ENCODE measurements at regions of chr14 and their contacts with region 1.

Region 1: DNA sequence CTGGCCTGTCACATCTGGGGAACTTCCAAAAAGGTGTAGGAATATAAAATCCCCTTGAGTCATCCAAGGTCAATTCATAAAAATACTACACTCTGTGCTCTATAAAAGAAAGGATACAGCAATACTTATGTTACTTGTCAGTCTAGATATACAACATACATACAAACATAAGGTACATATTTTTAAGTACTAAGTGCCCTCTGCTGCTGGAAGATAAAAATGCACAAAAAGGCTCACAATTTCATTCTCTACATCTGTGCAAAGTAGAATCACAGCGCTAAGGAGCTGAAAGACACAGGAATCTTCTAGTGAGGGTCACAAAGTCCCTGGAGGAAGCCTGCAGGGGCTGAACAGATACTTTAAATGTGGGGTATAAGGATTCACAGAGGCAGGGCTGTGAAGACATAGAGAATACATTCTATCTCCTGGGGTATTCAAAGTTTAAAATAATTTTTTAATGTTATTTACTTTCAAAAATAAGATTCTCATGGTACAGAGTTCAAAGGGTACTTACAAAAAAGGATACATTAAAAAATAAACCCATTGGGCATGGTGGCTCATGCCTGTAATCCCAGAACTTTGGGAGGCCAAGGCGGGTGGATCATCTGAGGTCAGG is 10.2 kb upstream of the GOLGA5 start:
- DNase-seq: peak; percentile 45
- H3K4me3 Mint-ChIP-seq: no peak overlapping the region
- H3K27ac Mint-ChIP-seq: no peak overlapping the region
- H3K4me1 Mint-ChIP-seq: peaks cover 21% of the 10 kb centered on the region
- H3K27me3 Mint-ChIP-seq: no peaks in the 10 kb centered on the region
- CTCF ChIP-seq: no peak

Region 2: GRCh38 chr14:92686900-92687444 is 97.0 kb before region 1 on chr14:
- CTCF ChIA-PET with region 1: interaction called, 10 read pairs
- intact Hi-C with region 1: loop called (anchors 10 kb)
- DNase-seq: peak; percentile 91
- H3K4me3 Mint-ChIP-seq: no peak overlapping the region
- H3K27ac Mint-ChIP-seq: no peak overlapping the region
- H3K4me1 Mint-ChIP-seq: no peaks in the 10 kb centered on the region
- H3K27me3 Mint-ChIP-seq: no peaks in the 10 kb centered on the region
- CTCF ChIP-seq: peak; percentile 97

Region 3: GRCh38 chr14:92698393-92698792 is 85.5 kb before region 1 on chr14:
- CTCF ChIA-PET with region 1: no interaction called
- intact Hi-C with region 1: no loop called
- DNase-seq: no peak
- H3K4me3 Mint-ChIP-seq: no peak overlapping the region
- H3K27ac Mint-ChIP-seq: no peak overlapping the region
- H3K4me1 Mint-ChIP-seq: no peaks in the 10 kb centered on the region
- H3K27me3 Mint-ChIP-seq: peaks cover 40% of the 10 kb centered on the region
- CTCF ChIP-seq: no peak

Region 4: GRCh38 chr14:92717571-92718042 is 66.3 kb before region 1 on chr14:
- CTCF ChIA-PET with region 1: interaction called, 5 read pairs
- intact Hi-C with region 1: loop called (anchors 1 kb)
- DNase-seq: no peak
- H3K4me3 Mint-ChIP-seq: no peak overlapping the region
- H3K27ac Mint-ChIP-seq: no peak overlapping the region
- H3K4me1 Mint-ChIP-seq: peaks cover 12% of the 10 kb centered on the region
- H3K27me3 Mint-ChIP-seq: no peaks in the 10 kb centered on the region
- CTCF ChIP-seq: no peak

Region 5: DNA sequence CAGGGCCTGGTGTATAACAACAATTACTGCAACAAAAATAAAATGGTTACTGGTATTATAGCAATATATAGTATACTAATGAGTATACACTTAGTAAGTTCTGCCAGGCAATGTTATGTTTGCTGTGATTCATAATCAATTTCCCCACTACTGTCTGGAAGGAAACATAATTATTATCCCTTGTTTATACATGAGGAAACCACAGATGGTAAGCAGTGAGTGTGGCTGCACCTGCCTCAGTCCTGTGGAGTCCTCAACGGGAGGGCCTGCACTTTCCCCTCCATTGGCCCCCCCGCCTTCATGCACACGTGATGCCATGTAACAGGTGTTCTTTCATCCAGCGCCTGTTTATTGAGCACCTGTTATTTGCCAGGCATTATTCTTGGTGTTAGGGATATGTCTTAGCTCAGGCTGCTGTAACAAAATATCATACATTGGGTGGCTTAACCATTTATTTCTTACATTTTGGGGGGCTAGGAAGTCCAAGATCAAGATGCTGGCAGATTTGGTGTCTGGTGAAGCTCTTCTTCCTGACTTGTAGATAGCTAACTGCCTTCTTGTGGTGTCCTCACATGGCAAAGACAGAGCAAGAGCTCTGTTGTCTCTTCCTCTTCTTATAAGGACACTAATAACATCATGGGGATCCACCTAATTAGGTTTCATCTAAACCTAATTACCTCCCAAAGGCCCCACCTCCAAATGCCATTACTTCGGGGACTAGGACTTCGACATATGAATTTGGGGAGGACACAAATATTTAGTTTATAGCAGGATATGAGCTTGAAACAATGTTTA is 79.6 kb after region 1 on chr14:
- CTCF ChIA-PET with region 1: no interaction called
- intact Hi-C with region 1: no loop called
- DNase-seq: no peak
- H3K4me3 Mint-ChIP-seq: no peak overlapping the region
- H3K27ac Mint-ChIP-seq: no peak overlapping the region
- H3K4me1 Mint-ChIP-seq: no peaks in the 10 kb centered on the region
- H3K27me3 Mint-ChIP-seq: peaks cover 60% of the 10 kb centered on the region
- CTCF ChIP-seq: no peak

Region 6: DNA sequence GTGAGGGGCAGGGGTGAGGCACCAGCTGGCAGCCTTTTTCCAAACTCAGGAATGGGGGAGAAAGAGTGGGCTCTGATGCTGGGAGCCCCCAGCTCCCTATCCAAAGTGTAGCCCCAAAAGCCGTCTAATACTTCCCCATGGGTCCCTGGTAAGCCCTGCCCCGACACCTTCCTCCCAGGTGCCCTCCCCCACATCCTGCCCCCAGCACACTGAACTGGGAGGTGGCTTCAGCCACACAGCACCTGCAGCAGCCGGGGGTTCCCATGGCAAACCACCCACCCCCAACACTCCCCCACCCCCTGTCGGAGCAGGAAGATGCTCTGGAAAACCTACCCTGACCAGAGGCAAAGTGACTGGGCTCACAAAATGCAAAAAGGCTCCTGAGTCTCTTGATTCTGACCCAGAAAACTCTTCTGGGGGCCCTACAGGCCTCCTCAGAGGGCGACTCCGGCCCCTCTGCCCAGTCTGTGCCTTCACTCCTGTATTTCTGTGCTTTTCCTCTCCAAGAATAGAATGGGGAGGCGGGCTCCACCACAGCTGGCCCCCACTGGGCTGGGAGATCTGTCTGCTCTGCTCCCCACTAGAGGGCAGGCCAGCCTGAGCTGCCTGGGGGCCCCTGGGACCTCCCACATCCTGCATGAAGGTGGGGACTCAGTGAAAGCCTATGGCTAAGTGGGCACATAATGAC is 250.2 kb after region 1 on chr14:
- CTCF ChIA-PET with region 1: no interaction called
- intact Hi-C with region 1: no loop called
- DNase-seq: peak; percentile 44
- H3K4me3 Mint-ChIP-seq: no peak overlapping the region
- H3K27ac Mint-ChIP-seq: peak overlapping the region; percentile 17
- H3K4me1 Mint-ChIP-seq: peaks cover 63% of the 10 kb centered on the region
- H3K27me3 Mint-ChIP-seq: no peaks in the 10 kb centered on the region
- CTCF ChIP-seq: no peak